Activated naive CD8-positive, alpha-beta T cell treated with anti-CD3 and anti-CD28 coated beads, Interleukin-2, amount 10 ng/mL, durations not matched to agents 7 days and 5 days (primary cell): ENCODE measurements at regions of chrX and their contacts with region 1.

Region 1: DNA sequence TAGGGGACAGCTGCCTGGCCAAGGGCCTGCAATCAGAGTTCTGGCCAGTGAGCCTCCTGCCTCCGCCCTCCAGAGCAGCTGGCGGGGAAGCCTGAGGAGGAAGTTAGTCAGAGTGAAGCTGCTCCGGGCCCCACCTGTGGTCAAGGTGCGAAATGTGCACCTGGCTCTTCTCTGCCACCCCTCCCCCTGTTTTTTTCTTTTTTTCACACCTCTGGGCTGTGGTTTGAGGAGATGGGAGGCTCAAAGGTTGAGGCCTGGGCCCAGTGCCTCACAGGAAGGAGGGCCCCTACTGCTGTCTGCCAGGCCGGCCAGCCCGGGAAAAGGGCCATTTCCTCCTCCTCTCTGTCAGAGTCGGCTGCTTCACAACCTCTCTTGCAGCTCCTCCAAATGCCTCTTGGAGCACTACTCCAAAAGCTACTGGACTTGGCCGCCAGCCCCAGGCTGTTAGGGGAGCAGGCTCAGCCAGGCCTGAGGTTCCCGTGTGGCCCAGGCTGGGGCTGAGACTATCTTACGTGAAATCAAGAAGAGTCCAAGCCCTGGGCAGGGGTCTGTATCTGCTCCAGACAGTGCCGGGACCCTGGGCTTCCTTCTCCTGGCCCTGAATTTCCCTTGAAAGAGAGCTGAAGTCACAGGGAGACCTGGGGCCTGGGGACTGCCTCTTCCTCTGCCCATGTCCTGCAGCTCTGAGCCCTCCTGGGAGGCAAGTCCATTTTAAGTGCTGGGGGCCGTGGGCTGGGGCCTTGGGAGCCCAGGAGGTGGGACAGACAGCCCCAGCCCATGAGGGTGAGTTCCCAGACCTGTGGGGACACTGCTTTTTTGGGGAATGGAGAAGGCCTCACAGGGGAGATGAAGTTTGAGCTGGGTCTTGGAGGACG is 4.5 kb upstream of the CXCR3 start:
- DNase-seq: peak; percentile 70
- ATAC-seq: peak; percentile 77
- H3K4me3 Mint-ChIP-seq: peak overlapping the region; percentile 78
- H3K27ac Mint-ChIP-seq: peak overlapping the region; percentile 95
- H3K4me1 Mint-ChIP-seq: peaks cover 39% of the 10 kb centered on the region
- H3K27me3 Mint-ChIP-seq: no peaks in the 10 kb centered on the region

Region 2: DNA sequence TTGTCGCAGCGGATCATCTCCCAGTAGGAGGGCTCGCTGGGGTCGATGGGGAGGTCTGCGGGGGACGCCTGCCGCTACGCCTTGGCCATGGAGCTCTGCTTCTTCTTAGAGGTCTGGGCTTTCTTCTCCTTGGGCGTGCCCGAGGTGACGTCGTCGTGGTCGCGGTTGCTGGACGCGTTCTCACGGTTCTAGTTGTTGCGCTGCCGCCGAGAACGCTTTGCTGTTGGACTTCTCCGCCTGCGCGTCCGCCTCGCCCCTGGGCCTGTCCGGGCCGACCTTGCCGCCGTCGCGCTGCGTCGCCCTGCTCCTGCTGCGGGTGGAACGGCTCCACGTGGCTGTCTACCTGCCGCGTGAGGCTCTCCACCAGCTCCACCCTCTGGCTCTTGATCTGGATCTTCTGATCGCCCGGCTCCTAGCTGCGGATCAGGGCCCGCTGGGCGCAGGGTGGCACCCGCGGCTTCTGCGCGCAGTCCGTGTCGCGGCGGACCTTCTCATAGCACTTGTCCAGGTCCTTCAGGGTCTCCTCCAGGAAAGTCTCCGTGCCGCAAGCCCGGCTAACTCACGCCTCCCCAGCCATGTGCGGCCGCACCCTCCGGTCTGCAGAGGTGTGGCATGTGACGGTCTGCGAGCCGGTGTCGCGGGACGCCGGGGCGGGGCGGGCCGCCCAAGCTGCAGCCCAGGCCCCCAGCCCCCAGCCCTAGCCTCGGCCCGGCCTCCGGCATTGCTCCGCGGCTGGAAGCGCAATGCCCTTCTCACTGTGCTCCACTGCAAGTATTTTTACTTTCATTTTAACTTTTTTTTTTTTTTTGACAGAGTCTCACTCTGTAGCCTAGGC is 130.4 kb before region 1 on chrX:
- POLR2A ChIA-PET with region 1: no interaction called
- DNase-seq: peak; percentile 62
- ATAC-seq: peak; percentile 85
- H3K4me3 Mint-ChIP-seq: peak overlapping the region; percentile 84
- H3K27ac Mint-ChIP-seq: peak overlapping the region; percentile 79
- H3K4me1 Mint-ChIP-seq: peaks cover 8% of the 10 kb centered on the region
- H3K27me3 Mint-ChIP-seq: no peaks in the 10 kb centered on the region

Region 3: DNA sequence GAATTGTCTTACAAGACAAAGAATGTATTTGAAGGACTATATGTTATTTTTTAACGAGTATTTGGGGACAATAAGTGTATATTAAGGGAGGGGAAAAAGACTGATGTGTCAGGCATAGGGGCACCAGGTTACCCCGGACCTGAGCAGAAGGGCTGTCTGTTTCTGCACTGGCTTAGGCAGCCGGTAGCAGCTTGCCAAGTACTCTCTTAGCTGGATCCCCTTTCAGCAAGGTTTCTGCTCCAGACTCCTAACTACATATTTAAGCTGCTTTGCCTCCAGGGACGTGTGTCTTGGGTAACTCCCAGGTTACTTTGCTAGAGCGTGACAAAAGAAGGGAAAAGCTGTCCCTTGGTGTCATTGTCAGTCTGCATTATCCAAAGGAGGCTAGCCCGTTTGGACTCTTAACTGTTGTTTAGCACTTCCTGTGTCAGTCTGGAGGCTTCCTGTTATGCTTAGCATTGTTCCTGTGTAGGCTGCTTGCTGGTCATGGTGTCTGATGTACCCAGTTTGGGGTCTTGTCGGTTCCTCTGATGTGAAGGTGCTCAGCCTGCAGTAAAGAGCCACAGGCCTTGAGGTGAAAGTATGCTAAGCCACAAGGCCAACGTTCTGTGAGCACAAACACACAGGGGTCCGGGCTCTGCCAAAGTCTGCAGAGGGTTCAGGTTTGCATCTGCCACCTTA is 16.1 kb before region 1 on chrX:
- POLR2A ChIA-PET with region 1: interaction called, 10 read pairs
- DNase-seq: peak; percentile 37
- ATAC-seq: peak; percentile 91
- H3K4me3 Mint-ChIP-seq: peak overlapping the region; percentile 72
- H3K27ac Mint-ChIP-seq: peak overlapping the region; percentile 95
- H3K4me1 Mint-ChIP-seq: peaks cover 50% of the 10 kb centered on the region
- H3K27me3 Mint-ChIP-seq: no peaks in the 10 kb centered on the region

Region 4: GRCh38 chrX:71637848-71638247 is 15.0 kb after region 1 on chrX:
- POLR2A ChIA-PET with region 1: interaction called, 15 read pairs
- DNase-seq: no peak
- ATAC-seq: peak; percentile 31
- H3K4me3 Mint-ChIP-seq: no peak overlapping the region
- H3K27ac Mint-ChIP-seq: no peak overlapping the region
- H3K4me1 Mint-ChIP-seq: peaks cover 17% of the 10 kb centered on the region
- H3K27me3 Mint-ChIP-seq: no peaks in the 10 kb centered on the region